Esophagus muscularis mucosa (tissue), 4 donors: ENCODE measurements at regions of chr9 and their contacts with region 1.

Region 1: DNA sequence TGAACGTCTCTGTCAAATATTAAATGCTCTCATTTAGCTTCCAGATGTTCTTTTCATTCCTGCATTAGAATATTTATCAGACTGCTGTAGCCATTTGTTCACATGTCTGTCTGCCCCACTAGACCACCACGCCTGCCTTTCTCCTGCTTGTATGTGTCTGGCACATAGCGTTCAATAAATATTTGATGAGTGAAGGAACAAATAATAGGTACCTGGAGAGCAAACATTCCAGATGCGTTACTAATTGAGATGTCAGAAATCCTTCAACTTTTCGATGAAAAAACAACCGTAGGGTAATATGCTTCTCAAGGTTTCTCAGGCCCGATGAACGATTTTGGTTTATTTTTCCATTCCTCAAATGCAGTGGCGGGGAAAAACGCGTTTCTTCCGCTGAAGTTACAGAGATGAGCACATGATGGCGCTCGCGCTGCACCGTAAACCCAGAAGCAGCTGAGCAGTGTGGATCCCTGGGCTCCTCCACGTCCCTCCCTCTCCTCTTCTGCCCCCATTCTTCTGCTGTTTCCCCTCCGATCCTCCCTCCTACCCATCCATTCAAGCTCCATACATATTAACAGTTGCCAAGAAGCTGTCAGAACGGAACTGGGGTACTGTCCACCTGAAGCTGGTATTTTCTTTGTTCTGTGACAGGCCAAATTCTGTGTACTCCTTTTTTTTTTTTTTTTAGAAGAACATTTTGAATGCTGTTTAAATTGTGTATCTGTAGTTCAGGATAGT is 245.4 kb downstream of the MPDZ start:
- DNase-seq: no peak
- H3K4me3 ChIP-seq: peak overlapping the region; percentile 31 to 50 (median 38)
- H3K27ac ChIP-seq: peak overlapping the region; percentile 13 to 51 (median 32)
- H3K4me1 ChIP-seq: peaks cover 0 to 21% (median 14%) of the 10 kb centered on the region in 4 donors
- H3K27me3 ChIP-seq: no peaks in the 10 kb centered on the region
- CTCF ChIP-seq: peak; percentile 63 to 80 (median 78)
- EP300 ChIP-seq: no peak
- POLR2A ChIP-seq: no peak

Region 2: DNA sequence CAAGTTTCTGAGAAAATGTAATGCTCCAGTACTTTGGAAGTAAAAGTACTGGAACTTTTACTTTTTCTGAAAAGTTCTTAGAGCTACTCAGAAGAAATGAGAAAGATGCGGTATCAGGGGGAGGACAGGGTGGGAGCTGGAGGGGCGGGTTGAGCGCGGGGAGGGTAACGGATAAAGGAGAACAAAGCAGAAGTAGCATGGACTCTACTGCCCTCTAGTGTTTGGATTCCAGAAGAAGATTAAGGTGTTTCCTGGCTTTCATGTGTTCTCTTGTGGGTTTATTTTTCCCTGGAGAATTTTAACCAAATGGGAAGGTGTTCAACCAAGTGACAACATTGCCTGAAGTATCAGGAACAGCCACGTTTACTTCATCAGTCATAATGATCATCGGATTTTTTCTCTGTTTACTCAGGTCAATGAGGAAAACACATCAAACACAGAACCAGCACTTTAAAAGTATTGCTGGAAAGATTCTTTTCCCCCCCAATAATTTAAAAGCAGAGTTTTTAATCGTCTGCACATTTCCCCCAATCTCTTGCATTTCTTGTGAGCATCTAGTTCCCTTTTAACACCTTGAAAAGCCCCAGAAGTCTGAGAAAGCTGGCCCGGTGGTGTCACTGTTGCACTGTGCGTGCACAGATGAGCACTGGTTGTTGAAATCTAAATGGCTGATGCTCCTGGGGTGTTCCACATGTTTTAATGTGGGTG is 54.7 kb after region 1 on chr9:
- intact Hi-C with region 1: loop called (anchors 2 kb)
- DNase-seq: no peak
- H3K4me3 ChIP-seq: peak overlapping the region in 2 of 4 donors; percentile 3 to 23
- H3K27ac ChIP-seq: no peak overlapping the region
- H3K4me1 ChIP-seq: peaks cover 0 to 22% (median 8%) of the 10 kb centered on the region in 4 donors
- H3K27me3 ChIP-seq: no peaks in the 10 kb centered on the region
- CTCF ChIP-seq: peak; percentile 54 to 74 (median 74)
- EP300 ChIP-seq: no peak
- POLR2A ChIP-seq: no peak

Region 3: DNA sequence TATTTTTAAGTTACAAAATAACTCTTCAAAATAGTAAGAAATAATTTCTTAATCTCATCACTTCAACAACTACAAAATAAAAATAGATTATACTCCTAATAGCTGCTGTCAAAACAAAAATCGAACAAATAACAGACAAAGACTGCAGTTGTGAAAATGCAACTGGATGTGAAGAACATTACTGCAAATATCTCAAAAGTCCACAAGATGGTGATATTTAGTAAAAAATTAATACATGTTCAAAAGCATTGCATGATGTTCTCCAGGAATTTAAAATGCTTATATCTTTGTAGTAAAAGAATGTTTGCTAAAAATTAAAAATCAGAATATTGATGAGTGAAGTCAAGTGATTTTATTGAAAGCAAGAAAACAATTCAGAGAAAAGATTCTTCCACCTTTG is 179.2 kb after region 1 on chr9:
- intact Hi-C with region 1: loop called (anchors 10 kb)
- DNase-seq: no peak
- H3K4me3 ChIP-seq: no peak overlapping the region
- H3K27ac ChIP-seq: no peak overlapping the region
- H3K4me1 ChIP-seq: peaks cover 0 to 5% (median under 1%) of the 10 kb centered on the region in 4 donors
- H3K27me3 ChIP-seq: no peaks in the 10 kb centered on the region
- CTCF ChIP-seq: peak; percentile 26 to 48 (median 28)
- EP300 ChIP-seq: no peak
- POLR2A ChIP-seq: no peak

Region 4: GRCh38 chr9:14433351-14434157 is 1399.4 kb after region 1 on chr9:
- intact Hi-C with region 1: loop called (anchors 10 kb)
- DNase-seq: no peak
- H3K4me3 ChIP-seq: peak overlapping the region in 2 of 4 donors; percentile 7 to 29
- H3K27ac ChIP-seq: no peak overlapping the region
- H3K4me1 ChIP-seq: peaks cover 10 to 18% (median 14%) of the 10 kb centered on the region in 4 donors
- H3K27me3 ChIP-seq: no peaks in the 10 kb centered on the region
- CTCF ChIP-seq: peak; percentile 32 to 44 (median 34)
- EP300 ChIP-seq: no peak
- POLR2A ChIP-seq: no peak